CD8-positive, alpha-beta T cell (primary cell): ENCODE measurements at regions of chr6 and their contacts with region 1.

Region 1: GRCh38 chr6:151323791-151324487 is 67.4 kb downstream of the ZBTB2 start:
- DNase-seq: peak; percentile 36 to 83 (median 74)
- ATAC-seq: peak; percentile 80
- H3K4me3 ChIP-seq: no peak overlapping the region
- H3K4me3 Mint-ChIP-seq: peak overlapping the region; percentile 59
- H3K27ac ChIP-seq: no peak overlapping the region
- H3K27ac Mint-ChIP-seq: no peak overlapping the region
- H3K4me1 ChIP-seq: peaks cover 16% of the 10 kb centered on the region
- H3K4me1 Mint-ChIP-seq: peaks cover 21% of the 10 kb centered on the region
- H3K27me3 ChIP-seq: peaks cover 0 to 15% of the 10 kb centered on the region in 2 experiments
- H3K27me3 Mint-ChIP-seq: peaks cover 36% of the 10 kb centered on the region
- CTCF ChIP-seq: peak; percentile 96

Region 2: DNA sequence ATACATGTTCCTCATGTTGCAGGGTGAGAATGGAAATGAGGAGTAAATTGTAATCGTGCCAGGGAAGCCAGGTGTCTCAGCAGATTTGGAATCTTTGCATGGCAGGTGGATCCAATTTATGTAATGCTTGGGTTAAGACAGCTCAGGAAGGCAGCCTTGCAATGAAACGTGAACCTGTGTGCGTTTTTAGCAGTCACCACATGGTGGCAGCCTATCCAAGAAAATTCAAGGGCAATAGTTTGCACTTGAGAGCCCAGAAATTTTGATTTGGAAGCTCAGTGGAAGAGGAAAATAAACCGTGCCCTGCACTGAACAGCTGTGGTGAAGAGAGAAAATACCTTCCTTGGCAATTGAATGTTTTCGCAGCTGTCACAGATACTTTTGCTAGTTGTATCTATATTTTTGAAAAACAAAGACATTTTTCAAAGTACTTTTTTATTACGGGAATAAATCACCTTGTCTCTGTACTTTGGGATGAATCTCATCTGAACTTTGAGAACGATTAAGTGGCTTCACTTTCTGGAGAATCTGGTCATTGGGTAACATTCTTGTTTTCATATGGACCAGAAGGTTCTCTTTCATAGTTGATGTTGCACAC is 432.0 kb before region 1 on chr6:
- CTCF ChIA-PET with region 1: interaction called, 242 read pairs
- POLR2A ChIA-PET with region 1: interaction called, 4 read pairs
- intact Hi-C with region 1: loop called (anchors 1 kb)
- DNase-seq: peak; percentile 36 to 72 (median 58)
- ATAC-seq: peak; percentile 71
- H3K4me3 ChIP-seq: no peak overlapping the region
- H3K4me3 Mint-ChIP-seq: no peak overlapping the region
- H3K27ac ChIP-seq: no peak overlapping the region
- H3K27ac Mint-ChIP-seq: no peak overlapping the region
- H3K4me1 ChIP-seq: peaks cover 8% of the 10 kb centered on the region
- H3K4me1 Mint-ChIP-seq: peaks cover 15% of the 10 kb centered on the region
- H3K27me3 ChIP-seq: no peaks in the 10 kb centered on the region
- H3K27me3 Mint-ChIP-seq: no peaks in the 10 kb centered on the region
- CTCF ChIP-seq: peak; percentile 78

Region 3: GRCh38 chr6:151004415-151005024 is 319.4 kb before region 1 on chr6:
- CTCF ChIA-PET with region 1: interaction called, 27 read pairs
- POLR2A ChIA-PET with region 1: no interaction called
- intact Hi-C with region 1: no loop called
- DNase-seq: peak in 1 of 9 experiments; percentile 8
- ATAC-seq: no peak
- H3K4me3 ChIP-seq: no peak overlapping the region
- H3K4me3 Mint-ChIP-seq: no peak overlapping the region
- H3K27ac ChIP-seq: no peak overlapping the region
- H3K27ac Mint-ChIP-seq: no peak overlapping the region
- H3K4me1 ChIP-seq: no peaks in the 10 kb centered on the region
- H3K4me1 Mint-ChIP-seq: peaks cover 24% of the 10 kb centered on the region
- H3K27me3 ChIP-seq: no peaks in the 10 kb centered on the region
- H3K27me3 Mint-ChIP-seq: no peaks in the 10 kb centered on the region
- CTCF ChIP-seq: no peak

Region 4: GRCh38 chr6:151290877-151291721 is 32.8 kb before region 1 on chr6:
- CTCF ChIA-PET with region 1: interaction called, 14 read pairs
- POLR2A ChIA-PET with region 1: no interaction called
- intact Hi-C with region 1: no loop called
- DNase-seq: no peak
- ATAC-seq: no peak
- H3K4me3 ChIP-seq: no peak overlapping the region
- H3K4me3 Mint-ChIP-seq: no peak overlapping the region
- H3K27ac ChIP-seq: no peak overlapping the region
- H3K27ac Mint-ChIP-seq: no peak overlapping the region
- H3K4me1 ChIP-seq: peaks cover 11% of the 10 kb centered on the region
- H3K4me1 Mint-ChIP-seq: peaks cover 21% of the 10 kb centered on the region
- H3K27me3 ChIP-seq: peaks cover 0 to 3% of the 10 kb centered on the region in 2 experiments
- H3K27me3 Mint-ChIP-seq: peaks cover 37% of the 10 kb centered on the region
- CTCF ChIP-seq: no peak

Region 5: GRCh38 chr6:151313066-151313491 is 10.9 kb before region 1 on chr6:
- CTCF ChIA-PET with region 1: interaction called, 10 read pairs
- POLR2A ChIA-PET with region 1: no interaction called
- intact Hi-C with region 1: no loop called
- DNase-seq: no peak
- ATAC-seq: no peak
- H3K4me3 ChIP-seq: no peak overlapping the region
- H3K4me3 Mint-ChIP-seq: no peak overlapping the region
- H3K27ac ChIP-seq: no peak overlapping the region
- H3K27ac Mint-ChIP-seq: no peak overlapping the region
- H3K4me1 ChIP-seq: no peaks in the 10 kb centered on the region
- H3K4me1 Mint-ChIP-seq: no peaks in the 10 kb centered on the region
- H3K27me3 ChIP-seq: no peaks in the 10 kb centered on the region
- H3K27me3 Mint-ChIP-seq: peaks cover 2% of the 10 kb centered on the region
- CTCF ChIP-seq: no peak

Region 6: GRCh38 chr6:151349651-151350282 is 25.8 kb after region 1 on chr6:
- CTCF ChIA-PET with region 1: interaction called, 17 read pairs
- POLR2A ChIA-PET with region 1: no interaction called
- intact Hi-C with region 1: no loop called
- DNase-seq: peak in 1 of 9 experiments; percentile 19
- ATAC-seq: no peak
- H3K4me3 ChIP-seq: no peak overlapping the region
- H3K4me3 Mint-ChIP-seq: no peak overlapping the region
- H3K27ac ChIP-seq: no peak overlapping the region
- H3K27ac Mint-ChIP-seq: no peak overlapping the region
- H3K4me1 ChIP-seq: no peaks in the 10 kb centered on the region
- H3K4me1 Mint-ChIP-seq: no peaks in the 10 kb centered on the region
- H3K27me3 ChIP-seq: no peaks in the 10 kb centered on the region
- H3K27me3 Mint-ChIP-seq: no peaks in the 10 kb centered on the region
- CTCF ChIP-seq: no peak

Region 7: GRCh38 chr6:151440930-151441329 is 117.0 kb after region 1 on chr6:
- CTCF ChIA-PET with region 1: interaction called, 12 read pairs
- POLR2A ChIA-PET with region 1: no interaction called
- intact Hi-C with region 1: no loop called
- DNase-seq: peak in 2 of 9 experiments; percentile 55 to 67
- ATAC-seq: peak; percentile 52
- H3K4me3 ChIP-seq: no peak overlapping the region
- H3K4me3 Mint-ChIP-seq: no peak overlapping the region
- H3K27ac ChIP-seq: peak overlapping the region in 1 of 2 experiments; percentile 23
- H3K27ac Mint-ChIP-seq: no peak overlapping the region
- H3K4me1 ChIP-seq: peaks cover 16% of the 10 kb centered on the region
- H3K4me1 Mint-ChIP-seq: peaks cover 47% of the 10 kb centered on the region
- H3K27me3 ChIP-seq: no peaks in the 10 kb centered on the region
- H3K27me3 Mint-ChIP-seq: no peaks in the 10 kb centered on the region
- CTCF ChIP-seq: peak; percentile 69

Region 8: DNA sequence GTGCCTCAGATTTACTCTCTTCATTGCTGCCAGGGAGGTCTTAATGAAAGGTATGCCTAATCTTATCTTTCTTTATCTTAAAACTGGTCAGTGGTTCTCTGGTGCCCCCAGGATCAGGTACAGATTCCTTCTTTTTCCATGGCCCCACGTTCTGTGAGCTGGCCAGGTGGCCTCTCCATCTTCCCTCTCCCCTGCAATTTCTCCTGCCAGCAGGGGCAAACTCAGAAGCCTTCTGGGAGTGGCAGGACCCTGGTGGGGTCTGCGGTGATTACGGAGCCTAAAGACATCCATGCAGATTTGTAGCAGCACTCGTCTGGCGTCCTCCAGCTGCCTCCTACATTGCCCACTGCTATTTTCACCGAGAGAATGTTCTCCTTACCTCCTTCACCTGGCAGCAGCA is 265.7 kb after region 1 on chr6:
- CTCF ChIA-PET with region 1: no interaction called
- POLR2A ChIA-PET with region 1: no interaction called
- intact Hi-C with region 1: no loop called
- DNase-seq: no peak
- ATAC-seq: no peak
- H3K4me3 ChIP-seq: no peak overlapping the region
- H3K4me3 Mint-ChIP-seq: no peak overlapping the region
- H3K27ac ChIP-seq: no peak overlapping the region
- H3K27ac Mint-ChIP-seq: no peak overlapping the region
- H3K4me1 ChIP-seq: no peaks in the 10 kb centered on the region
- H3K4me1 Mint-ChIP-seq: no peaks in the 10 kb centered on the region
- H3K27me3 ChIP-seq: no peaks in the 10 kb centered on the region
- H3K27me3 Mint-ChIP-seq: peaks cover 4% of the 10 kb centered on the region
- CTCF ChIP-seq: no peak